Activated naive CD4-positive, alpha-beta T cell treated with anti-CD3 and anti-CD28 coated beads for 36 hours (primary cell): ENCODE measurements at regions of chr4 and their contacts with region 1.

Region 1: GRCh38 chr4:13654158-13654797 is 26.8 kb upstream of the BOD1L1 start:
- DNase-seq: peak; percentile 88
- H3K4me3 Mint-ChIP-seq: peak overlapping the region; percentile 76
- H3K27ac Mint-ChIP-seq: no peak overlapping the region
- H3K4me1 Mint-ChIP-seq: peaks cover 15% of the 10 kb centered on the region
- H3K27me3 Mint-ChIP-seq: peaks cover 1% of the 10 kb centered on the region

Region 2: DNA sequence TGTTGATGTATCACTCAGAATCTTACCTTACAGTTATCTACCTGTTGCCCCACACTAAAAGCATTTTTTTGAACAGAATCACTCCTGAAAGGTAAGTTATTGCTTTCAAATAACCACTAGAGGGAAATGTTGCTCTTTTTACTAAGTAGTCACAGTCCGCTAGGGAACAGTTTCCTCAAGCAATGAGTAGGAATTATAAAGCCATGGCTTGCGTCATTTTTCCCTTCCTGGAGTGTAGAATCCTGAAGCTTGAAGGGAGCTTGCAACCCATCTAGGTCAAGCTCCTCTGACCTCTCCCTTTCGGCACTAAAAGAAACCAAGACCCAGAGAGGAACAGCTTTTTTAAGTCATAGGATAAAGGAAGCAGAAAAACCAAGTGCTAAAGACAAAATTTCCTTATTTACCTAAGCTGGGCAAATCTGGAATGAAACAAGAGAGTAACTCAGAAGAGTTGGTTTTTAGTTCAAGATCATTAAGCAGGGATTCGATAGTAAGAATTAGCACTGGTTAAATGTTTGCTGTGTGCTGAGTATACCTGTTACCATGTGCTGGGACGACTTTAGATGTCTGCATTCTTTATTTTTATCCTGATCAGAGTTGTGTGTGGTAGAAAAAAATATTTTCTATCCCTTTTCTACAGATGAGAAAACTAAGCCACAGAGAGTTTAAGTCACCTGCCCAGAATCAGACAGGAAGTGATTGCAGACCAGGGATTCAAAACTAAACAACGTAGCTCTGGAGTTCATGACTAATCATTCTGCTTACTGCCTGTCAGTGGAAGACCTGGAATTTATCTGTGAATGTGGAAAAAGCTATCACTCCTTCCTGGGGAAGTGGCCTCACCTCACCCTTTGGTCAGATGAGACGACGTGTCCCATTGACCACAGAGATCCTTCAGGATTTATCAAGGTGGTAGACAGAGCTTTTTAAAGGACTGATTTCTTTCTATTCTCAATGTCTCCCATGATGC is 801.7 kb before region 1 on chr4:
- CTCF ChIA-PET with region 1: no interaction called
- intact Hi-C with region 1: loop called (anchors 1 kb)
- DNase-seq: no peak
- H3K4me3 Mint-ChIP-seq: no peak overlapping the region
- H3K27ac Mint-ChIP-seq: no peak overlapping the region
- H3K4me1 Mint-ChIP-seq: no peaks in the 10 kb centered on the region
- H3K27me3 Mint-ChIP-seq: peaks cover 10% of the 10 kb centered on the region

Region 3: DNA sequence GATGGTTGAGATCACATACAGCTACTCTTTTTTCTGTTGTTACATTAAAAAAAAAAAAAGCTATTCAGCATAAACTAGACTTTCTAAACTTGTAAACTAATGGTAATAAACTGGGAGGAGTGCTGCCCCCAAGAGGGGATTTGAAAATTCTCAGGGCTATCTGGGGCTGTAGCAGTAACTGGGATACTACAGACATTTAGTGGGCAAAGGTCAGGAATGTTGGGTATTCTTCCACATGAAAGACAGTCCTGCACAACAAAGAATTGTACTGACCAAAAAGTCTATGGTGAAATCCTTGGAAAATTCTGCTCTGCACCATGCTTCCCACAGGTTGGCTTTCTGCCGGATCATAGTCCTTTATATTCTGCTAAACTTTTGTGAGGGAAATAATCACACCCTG is 205.8 kb after region 1 on chr4:
- CTCF ChIA-PET with region 1: interaction called, 4 read pairs
- intact Hi-C with region 1: loop called (anchors 10 kb)
- DNase-seq: no peak
- H3K4me3 Mint-ChIP-seq: no peak overlapping the region
- H3K27ac Mint-ChIP-seq: no peak overlapping the region
- H3K4me1 Mint-ChIP-seq: no peaks in the 10 kb centered on the region
- H3K27me3 Mint-ChIP-seq: peaks cover 2% of the 10 kb centered on the region

Region 4: DNA sequence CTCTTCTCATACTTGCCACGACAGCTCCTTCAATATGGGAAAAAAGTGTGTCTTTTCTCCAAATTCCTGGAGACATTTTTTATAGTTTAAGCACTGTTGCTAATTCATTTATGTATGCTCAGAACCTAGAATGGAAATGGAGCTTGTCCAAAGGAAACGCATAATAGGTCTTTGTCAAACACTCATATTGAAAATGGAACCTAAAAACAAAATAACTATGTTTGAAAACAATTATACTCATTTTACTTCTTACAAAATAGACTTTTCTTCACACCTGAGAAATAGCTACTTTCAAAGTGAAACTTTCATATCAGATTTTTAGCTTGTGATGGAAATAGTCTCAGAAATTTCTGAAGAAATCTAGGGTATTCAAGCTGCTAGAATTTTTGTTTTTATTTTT is 503.0 kb after region 1 on chr4:
- CTCF ChIA-PET with region 1: no interaction called
- intact Hi-C with region 1: loop called (anchors 5 kb)
- DNase-seq: no peak
- H3K4me3 Mint-ChIP-seq: no peak overlapping the region
- H3K27ac Mint-ChIP-seq: no peak overlapping the region
- H3K4me1 Mint-ChIP-seq: no peaks in the 10 kb centered on the region
- H3K27me3 Mint-ChIP-seq: peaks cover 10% of the 10 kb centered on the region

Region 5: GRCh38 chr4:14787894-14788293 is 1133.6 kb after region 1 on chr4:
- CTCF ChIA-PET with region 1: no interaction called
- intact Hi-C with region 1: loop called (anchors 1 kb)
- DNase-seq: peak; percentile 41
- H3K4me3 Mint-ChIP-seq: no peak overlapping the region
- H3K27ac Mint-ChIP-seq: no peak overlapping the region
- H3K4me1 Mint-ChIP-seq: peaks cover 21% of the 10 kb centered on the region
- H3K27me3 Mint-ChIP-seq: peaks cover 33% of the 10 kb centered on the region

Region 6: DNA sequence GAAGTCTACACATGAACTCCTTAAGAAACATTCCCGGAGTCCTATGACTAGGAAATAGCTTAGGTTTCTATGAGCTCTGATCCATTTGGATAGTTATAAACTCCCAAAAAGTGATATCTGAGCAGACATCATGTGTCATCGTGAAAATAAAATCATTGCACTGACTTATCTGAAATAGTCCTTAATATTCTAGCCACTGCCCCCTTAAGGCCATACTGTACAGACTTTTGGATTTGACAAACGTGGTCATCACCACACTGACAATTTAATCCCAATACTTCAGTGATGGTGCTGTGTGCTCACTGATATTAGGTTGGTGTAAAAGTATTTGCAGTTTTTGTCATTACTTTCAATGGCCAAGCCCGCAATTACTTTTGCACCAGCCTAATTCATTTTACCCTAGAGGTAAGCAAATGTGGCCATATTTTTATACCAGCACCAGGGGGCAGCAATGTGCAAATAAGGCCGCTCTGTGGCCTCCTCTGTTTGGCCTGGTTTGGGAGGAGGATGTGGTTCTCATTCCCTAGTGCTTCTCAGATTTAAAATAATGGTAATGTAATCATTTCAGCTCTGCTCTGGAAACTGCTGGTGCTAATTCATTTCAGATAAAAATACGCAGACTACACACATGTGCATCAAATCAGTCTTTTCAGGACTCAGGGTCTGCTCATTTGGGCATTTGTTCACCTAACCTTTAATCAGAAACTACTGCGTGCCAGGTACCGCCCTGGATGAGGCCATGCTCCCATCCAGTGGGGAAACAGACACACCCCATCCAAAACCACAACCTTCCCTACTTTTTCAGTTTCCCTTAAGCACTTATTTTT is 1577.2 kb after region 1 on chr4:
- CTCF ChIA-PET with region 1: interaction called, 4 read pairs
- intact Hi-C with region 1: loop called (anchors 1 kb)
- DNase-seq: peak; percentile 89
- H3K4me3 Mint-ChIP-seq: no peak overlapping the region
- H3K27ac Mint-ChIP-seq: no peak overlapping the region
- H3K4me1 Mint-ChIP-seq: peaks cover 27% of the 10 kb centered on the region
- H3K27me3 Mint-ChIP-seq: no peaks in the 10 kb centered on the region